ENCODE measurements at regions of chr13 and their contacts with region 1.

Region 1: GRCh38 chr13:48720621-48721020 is 66.9 kb downstream of the CYSLTR2 start:
- DNase-seq: no peak
- H3K4me3 ChIP-seq: no peak overlapping the region
- H3K4me3 Mint-ChIP-seq: no peak overlapping the region
- H3K27ac ChIP-seq: no peak overlapping the region
- H3K27ac Mint-ChIP-seq: no peak overlapping the region
- H3K4me1 ChIP-seq: no peaks in the 10 kb centered on the region
- H3K4me1 Mint-ChIP-seq: no peaks in the 10 kb centered on the region
- H3K27me3 ChIP-seq: no peaks in the 10 kb centered on the region
- H3K27me3 Mint-ChIP-seq: peaks cover 0 to 1% of the 10 kb centered on the region in 2 donors

Region 2: DNA sequence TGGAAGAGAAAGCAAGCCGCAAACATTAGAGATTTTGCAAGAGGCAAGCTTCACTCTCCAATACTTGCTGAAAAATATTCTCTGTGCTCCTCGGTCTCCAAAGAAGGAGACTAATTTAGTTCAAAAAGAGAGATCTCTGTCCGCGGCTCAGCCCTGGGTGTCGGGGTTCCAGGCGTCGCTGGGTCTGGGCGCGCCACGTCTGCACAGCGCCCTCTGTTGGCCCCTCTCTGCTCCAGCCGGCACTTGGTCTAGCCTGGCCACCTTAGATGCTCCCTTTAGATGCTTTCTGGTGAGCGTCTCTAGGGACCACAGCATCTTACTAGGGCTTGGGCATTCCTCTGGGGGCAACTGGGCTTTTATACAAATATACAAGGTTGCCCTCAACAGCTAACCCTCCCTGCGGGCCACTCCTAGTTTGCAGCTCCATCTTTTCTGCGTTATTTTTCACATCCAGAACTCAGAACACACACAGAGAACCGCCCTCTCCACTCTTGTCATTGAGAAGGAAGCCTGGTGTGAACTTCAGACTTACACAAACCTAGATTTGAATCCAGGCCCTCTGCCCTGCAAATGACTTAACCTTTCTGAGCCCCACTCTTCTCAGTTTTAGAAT is 11.4 kb after region 1 on chr13:
- CTCF ChIA-PET with region 1: interaction called, 18 read pairs
- POLR2A ChIA-PET with region 1: no interaction called
- intact Hi-C with region 1: no loop called
- DNase-seq: peak in 4 of 5 donors; percentile 38 to 54 (median 50)
- H3K4me3 ChIP-seq: no peak overlapping the region
- H3K4me3 Mint-ChIP-seq: peak overlapping the region; percentile 60 to 89 (median 84)
- H3K27ac ChIP-seq: no peak overlapping the region
- H3K27ac Mint-ChIP-seq: peak overlapping the region in 3 of 7 donors; percentile 53 to 75 (median 60)
- H3K4me1 ChIP-seq: no peaks in the 10 kb centered on the region
- H3K4me1 Mint-ChIP-seq: peaks cover 10 to 17% (median 15%) of the 10 kb centered on the region in 4 donors
- H3K27me3 ChIP-seq: no peaks in the 10 kb centered on the region
- H3K27me3 Mint-ChIP-seq: peaks cover 0 to 3% of the 10 kb centered on the region in 2 donors

Measured in CD4-positive, alpha-beta memory T cell (primary cell).